ENCODE measurements at regions of chr10 and their contacts with region 1.

Region 1: GRCh38 chr10:6014241-6014761 is 37.0 kb upstream of the IL15RA start:
- DNase-seq: peak; percentile 67
- H3K4me3 Mint-ChIP-seq: no peak overlapping the region
- H3K27ac Mint-ChIP-seq: peak overlapping the region; percentile 90
- H3K4me1 Mint-ChIP-seq: peaks cover 69% of the 10 kb centered on the region
- H3K27me3 Mint-ChIP-seq: no peaks in the 10 kb centered on the region

Region 2: GRCh38 chr10:5940807-5941218 is 73.5 kb before region 1 on chr10:
- CTCF ChIA-PET with region 1: no interaction called
- POLR2A ChIA-PET with region 1: no interaction called
- intact Hi-C with region 1: no loop called
- DNase-seq: no peak
- H3K4me3 Mint-ChIP-seq: no peak overlapping the region
- H3K27ac Mint-ChIP-seq: no peak overlapping the region
- H3K4me1 Mint-ChIP-seq: peaks cover 2% of the 10 kb centered on the region
- H3K27me3 Mint-ChIP-seq: no peaks in the 10 kb centered on the region

Region 3: GRCh38 chr10:6002809-6003510 is 11.3 kb before region 1 on chr10:
- CTCF ChIA-PET with region 1: interaction called, 3 read pairs
- POLR2A ChIA-PET with region 1: interaction called, 3 read pairs
- intact Hi-C with region 1: loop called (anchors 1 kb)
- DNase-seq: peak; percentile 51
- H3K4me3 Mint-ChIP-seq: no peak overlapping the region
- H3K27ac Mint-ChIP-seq: peak overlapping the region; percentile 56
- H3K4me1 Mint-ChIP-seq: peaks cover 30% of the 10 kb centered on the region
- H3K27me3 Mint-ChIP-seq: peaks cover 10% of the 10 kb centered on the region